K562 (cell line): ENCODE measurements at regions of chr2 and their contacts with region 1.

Region 1: GRCh38 chr2:3728104-3729054 is 25.0 kb downstream of the DCDC2C start:
- DNase-seq: peak; percentile 42 to 49 (median 46)
- ATAC-seq: peak; percentile 74; the same call in 2 of the 3 replicates
- H3K4me3 ChIP-seq: no peak overlapping the region
- H3K27ac ChIP-seq: no peak overlapping the region
- H3K4me1 ChIP-seq: no peaks in the 10 kb centered on the region
- H3K27me3 ChIP-seq: peaks cover 0 to 19% of the 10 kb centered on the region in 2 experiments; a peak in 2 of 5 replicates
- CTCF ChIP-seq: peak; percentile 44 to 67 (median 49); a peak in 5 of 6 replicates
- EP300 ChIP-seq: no peak
- POLR2A ChIP-seq: no peak
- RAD21 ChIP-seq: peak; percentile 40 to 63; a peak in 3 of 4 replicates

Region 2: DNA sequence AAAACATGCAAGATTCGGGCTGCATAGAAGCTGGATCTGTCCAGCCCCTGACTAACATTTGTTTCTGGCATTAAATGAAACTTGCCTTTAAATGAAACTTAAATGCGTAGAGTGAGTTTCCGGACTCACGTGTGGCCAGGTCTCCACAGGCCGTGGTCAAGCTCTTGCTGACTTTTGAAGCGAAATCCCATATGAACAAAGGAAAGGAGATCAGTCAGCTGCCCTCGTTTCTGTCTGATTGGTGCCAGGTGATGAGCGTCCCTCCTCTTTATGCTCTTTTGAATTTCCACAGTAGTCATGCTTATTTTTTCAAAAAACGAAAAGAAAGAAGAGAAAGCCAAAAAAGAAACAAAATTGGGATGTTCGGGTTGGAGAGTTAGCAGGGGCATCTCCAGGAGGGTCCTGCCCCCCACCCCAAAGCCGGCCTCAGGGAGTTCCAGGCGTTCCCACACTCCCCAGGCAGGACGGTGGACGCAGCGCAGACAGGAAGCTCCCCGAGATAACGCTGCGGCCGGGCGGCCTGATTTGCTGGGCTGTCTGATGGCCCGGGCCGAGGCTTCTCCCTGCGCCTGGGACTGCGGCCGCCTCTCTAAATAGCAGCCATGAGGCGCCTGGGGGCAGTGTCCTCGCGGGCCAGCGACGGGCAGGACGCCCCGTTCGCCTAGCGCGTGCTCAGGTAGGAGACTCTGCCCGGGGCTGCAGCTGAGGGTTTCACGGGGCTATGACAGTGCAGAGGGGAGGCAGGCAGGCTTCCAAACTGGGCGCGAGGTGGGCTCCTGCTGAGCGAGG is 133.7 kb before region 1 on chr2 and contains the start of gene COLEC11:
- CTCF ChIA-PET with region 1: no interaction called
- POLR2A ChIA-PET with region 1: no interaction called
- in situ Hi-C with region 1: no loop called
- intact Hi-C with region 1: no loop called
- DNase-seq: peak; percentile 56 to 85 (median 71)
- ATAC-seq: peak; percentile 98
- H3K4me3 ChIP-seq: no peak within 1 kb of the TSS
- H3K27ac ChIP-seq: no peak within 1 kb of the TSS
- H3K4me1 ChIP-seq: peaks cover 22 to 36% of the 10 kb centered on the region in 2 experiments; a peak in 4 of 5 replicates
- H3K27me3 ChIP-seq: no peaks in the 10 kb centered on the region
- CTCF ChIP-seq: peak; percentile 59 to 72 (median 64)
- EP300 ChIP-seq: 0 out of 2 replicates have a peak, but pooled peaks have one; percentile 4
- POLR2A ChIP-seq: no peak
- RAD21 ChIP-seq: peak; percentile 41 to 72
- polyA plus RNA-seq, gene COLEC11: 0.32 to 0.73 TPM

Region 3: GRCh38 chr2:3780477-3781402 is 52.4 kb after region 1 on chr2:
- CTCF ChIA-PET with region 1: no interaction called
- POLR2A ChIA-PET with region 1: interaction called, 3 read pairs
- in situ Hi-C with region 1: no loop called
- intact Hi-C with region 1: loop called (anchors 1 kb)
- DNase-seq: peak; percentile 40 to 73 (median 56)
- ATAC-seq: peak; percentile 99
- H3K4me3 ChIP-seq: no peak overlapping the region
- H3K27ac ChIP-seq: no peak overlapping the region
- H3K4me1 ChIP-seq: no peaks in the 10 kb centered on the region
- H3K27me3 ChIP-seq: peaks cover 10 to 31% of the 10 kb centered on the region in 2 experiments; a peak in 4 of 5 replicates
- CTCF ChIP-seq: peak; percentile 68 to 82 (median 78)
- EP300 ChIP-seq: no peak
- POLR2A ChIP-seq: no peak
- RAD21 ChIP-seq: peak; percentile 27 to 66; a peak in 2 of 4 replicates

Region 4: GRCh38 chr2:3827673-3828575 is 99.5 kb after region 1 on chr2:
- CTCF ChIA-PET with region 1: no interaction called
- POLR2A ChIA-PET with region 1: no interaction called
- in situ Hi-C with region 1: no loop called
- intact Hi-C with region 1: loop called (anchors 2 kb)
- DNase-seq: peak; percentile 21 to 36 (median 28)
- ATAC-seq: peak; percentile 78
- H3K4me3 ChIP-seq: no peak overlapping the region
- H3K27ac ChIP-seq: no peak overlapping the region
- H3K4me1 ChIP-seq: no peaks in the 10 kb centered on the region
- H3K27me3 ChIP-seq: no peaks in the 10 kb centered on the region
- CTCF ChIP-seq: peak; percentile 53 to 65 (median 61)
- EP300 ChIP-seq: no peak
- POLR2A ChIP-seq: no peak
- RAD21 ChIP-seq: peak in 1 of 2 experiments; percentile 25; a peak in 1 of 4 replicates